Mammary epithelial cell (primary cell): ENCODE measurements at regions of chr9 and their contacts with region 1.

Region 1: DNA sequence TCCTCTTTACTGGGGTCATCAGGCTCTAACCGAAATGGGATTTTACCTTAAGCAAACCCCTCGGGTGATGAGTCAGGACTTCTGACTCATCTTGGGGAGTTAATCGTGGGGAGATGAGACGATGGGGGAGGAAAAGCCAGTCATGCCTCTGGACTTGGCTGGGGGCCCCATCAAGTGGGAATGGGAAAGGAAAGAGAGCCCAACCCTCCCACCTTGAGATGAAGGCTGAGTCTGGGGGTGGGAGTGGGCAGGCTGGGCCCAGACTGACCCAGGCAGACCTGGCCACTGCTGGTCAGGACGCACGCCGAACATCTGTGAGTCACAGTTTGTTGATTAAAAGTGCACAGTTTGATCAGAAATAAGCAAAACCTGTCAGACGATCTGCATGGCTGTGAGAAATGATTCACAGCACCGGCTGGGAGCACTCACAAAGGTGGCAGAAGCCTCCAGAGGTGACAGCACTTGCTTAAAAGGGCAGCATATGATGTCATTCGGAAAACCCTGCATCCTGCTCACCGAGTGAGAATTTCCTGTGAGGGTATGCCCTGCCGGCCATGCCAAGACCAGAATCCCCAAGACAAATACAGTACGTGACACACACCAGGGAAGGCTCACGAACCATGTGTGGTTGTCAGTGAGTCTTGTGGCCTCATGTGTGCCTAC is 50.0 kb upstream of the SLC25A51 start:
- DNase-seq: peak; percentile 99
- H3K4me3 ChIP-seq: no peak overlapping the region
- H3K27ac ChIP-seq: peak overlapping the region; percentile 82
- H3K4me1 ChIP-seq: peaks cover 46% of the 10 kb centered on the region
- H3K27me3 ChIP-seq: no peaks in the 10 kb centered on the region
- CTCF ChIP-seq: no peak

Region 2: DNA sequence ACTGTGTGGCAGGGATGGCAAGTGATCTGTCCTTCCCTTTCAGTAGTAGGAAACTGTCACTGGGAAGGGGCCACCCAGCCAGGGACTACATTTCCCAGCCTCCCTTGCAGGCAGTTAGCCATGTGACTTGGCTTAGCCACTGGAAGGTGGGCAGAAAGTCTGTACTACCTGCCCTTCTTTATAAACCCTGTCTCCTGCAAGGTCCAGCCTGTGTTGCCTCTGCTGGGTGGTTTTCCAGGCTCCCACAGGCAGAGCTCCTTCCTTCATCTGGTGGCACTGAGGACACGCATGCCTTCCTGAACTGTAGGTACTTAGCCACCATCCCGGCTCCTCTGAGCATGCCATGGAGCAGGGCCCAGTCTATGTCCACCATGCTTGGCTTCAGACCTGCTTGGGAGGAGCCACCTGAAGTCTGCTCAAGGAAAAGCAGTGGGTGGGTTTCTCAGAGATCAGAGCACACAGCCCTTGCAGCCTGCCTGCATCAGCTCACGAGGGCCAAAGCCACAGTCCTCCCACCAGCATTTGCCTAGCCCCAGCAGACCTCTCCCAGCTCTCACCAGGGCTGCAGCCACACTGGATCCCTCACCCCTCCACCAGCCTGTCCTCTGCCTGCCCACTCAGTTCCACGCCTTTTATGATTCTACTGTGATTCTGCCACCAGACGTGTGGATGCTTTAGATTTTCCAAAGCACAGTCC is 33.3 kb before region 1 on chr9:
- CTCF ChIA-PET with region 1: no interaction called
- dilution Hi-C with region 1: no loop called
- in situ Hi-C with region 1: no loop called
- intact Hi-C with region 1: loop called (anchors 2 kb)
- DNase-seq: no peak
- H3K4me3 ChIP-seq: no peak overlapping the region
- H3K27ac ChIP-seq: no peak overlapping the region
- H3K4me1 ChIP-seq: peaks cover 29% of the 10 kb centered on the region
- H3K27me3 ChIP-seq: no peaks in the 10 kb centered on the region
- CTCF ChIP-seq: no peak

Region 3: GRCh38 chr9:37963936-37964739 is 10.2 kb after region 1 on chr9:
- CTCF ChIA-PET with region 1: no interaction called
- dilution Hi-C with region 1: no loop called
- in situ Hi-C with region 1: no loop called
- intact Hi-C with region 1: loop called (anchors 1 kb)
- DNase-seq: peak; percentile 91
- H3K4me3 ChIP-seq: no peak overlapping the region
- H3K27ac ChIP-seq: peak overlapping the region; percentile 77
- H3K4me1 ChIP-seq: peaks cover 62% of the 10 kb centered on the region
- H3K27me3 ChIP-seq: no peaks in the 10 kb centered on the region
- CTCF ChIP-seq: no peak

Region 4: DNA sequence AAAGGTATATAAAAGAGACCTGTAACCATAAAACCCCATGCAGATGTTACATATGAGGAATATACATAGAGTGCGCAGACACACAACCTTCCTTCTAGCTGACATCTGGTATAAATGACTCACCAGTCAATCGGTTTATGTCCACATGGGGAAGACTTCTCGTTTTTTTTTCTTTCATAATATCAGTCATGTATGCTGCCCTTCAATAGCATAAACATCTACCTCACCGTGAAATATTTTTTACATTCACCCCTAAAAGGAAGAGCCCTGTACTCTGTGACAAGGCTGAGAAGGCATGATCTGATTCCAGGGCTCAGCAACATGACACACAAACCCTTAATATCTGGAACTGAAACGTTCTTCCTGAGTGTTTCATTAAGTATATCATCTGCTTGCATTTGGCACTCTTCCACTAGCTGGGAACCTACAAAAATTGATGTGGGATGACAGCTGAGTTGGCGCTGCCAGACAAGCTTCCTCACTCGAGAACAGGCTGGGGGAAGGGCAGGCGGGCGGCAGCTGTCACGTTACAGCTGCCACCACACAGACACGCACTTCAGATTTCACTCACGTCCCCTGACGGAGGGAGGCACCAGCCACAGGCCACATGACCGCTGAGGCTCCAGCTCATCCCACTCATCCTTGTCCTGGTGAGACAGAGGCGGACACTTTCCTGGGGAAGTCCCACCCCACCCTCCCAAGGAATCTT is 40.9 kb after region 1 on chr9:
- CTCF ChIA-PET with region 1: no interaction called
- dilution Hi-C with region 1: no loop called
- in situ Hi-C with region 1: no loop called
- intact Hi-C with region 1: loop called (anchors 5 kb)
- DNase-seq: no peak
- H3K4me3 ChIP-seq: no peak overlapping the region
- H3K27ac ChIP-seq: no peak overlapping the region
- H3K4me1 ChIP-seq: peaks cover 16% of the 10 kb centered on the region
- H3K27me3 ChIP-seq: no peaks in the 10 kb centered on the region
- CTCF ChIP-seq: no peak